ENCODE measurements at regions of chr9 and their contacts with region 1.

Region 1: DNA sequence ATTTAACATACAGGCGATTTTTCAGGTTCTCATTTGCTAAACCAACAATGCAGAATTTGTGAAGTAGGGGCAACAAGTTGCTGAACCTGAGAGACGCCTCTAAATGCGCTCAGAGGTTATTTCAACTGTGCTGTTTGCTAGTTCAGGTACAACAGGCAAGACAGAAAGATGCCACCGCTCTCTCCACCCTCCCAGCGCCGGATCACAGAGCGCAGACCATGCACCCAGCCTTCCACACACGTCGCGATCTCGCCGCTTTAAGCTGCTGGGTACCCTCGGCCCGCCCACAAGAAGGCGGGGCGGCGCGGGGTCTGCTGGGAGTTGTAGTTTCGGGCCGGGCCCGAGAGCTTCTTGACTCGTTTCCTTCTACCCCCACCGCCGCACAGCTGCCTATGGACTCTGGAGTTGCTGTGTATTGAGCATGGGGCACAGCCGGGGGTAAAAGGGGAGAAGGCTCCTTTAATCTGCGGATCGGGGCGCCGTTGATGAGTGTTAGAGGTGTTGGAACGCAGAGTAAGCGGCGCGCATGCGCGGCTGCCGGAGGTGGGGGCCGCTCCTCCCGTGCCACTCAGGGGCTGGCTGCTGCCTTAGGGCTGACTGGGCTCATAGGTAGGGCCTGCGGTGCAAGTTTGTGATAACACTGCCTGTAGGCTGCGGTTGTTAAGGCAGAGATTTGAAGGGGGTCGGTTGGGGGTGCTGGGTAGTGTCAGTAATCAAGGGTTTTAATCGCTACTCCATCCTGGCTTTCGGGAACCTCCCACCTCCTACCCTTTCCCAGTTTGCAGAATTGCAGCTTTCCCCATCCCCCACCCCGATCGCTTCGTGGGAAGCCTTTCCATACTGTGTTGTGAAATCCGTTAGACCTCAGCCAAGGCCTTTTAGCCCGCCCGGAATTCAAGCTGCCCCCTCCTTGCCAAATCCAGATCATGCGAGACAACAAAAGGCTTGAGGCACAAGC is 40.3 kb upstream of the ABCA1 start:
- DNase-seq: peak; percentile 92
- ATAC-seq: peak; percentile 95 to 99

Region 2: DNA sequence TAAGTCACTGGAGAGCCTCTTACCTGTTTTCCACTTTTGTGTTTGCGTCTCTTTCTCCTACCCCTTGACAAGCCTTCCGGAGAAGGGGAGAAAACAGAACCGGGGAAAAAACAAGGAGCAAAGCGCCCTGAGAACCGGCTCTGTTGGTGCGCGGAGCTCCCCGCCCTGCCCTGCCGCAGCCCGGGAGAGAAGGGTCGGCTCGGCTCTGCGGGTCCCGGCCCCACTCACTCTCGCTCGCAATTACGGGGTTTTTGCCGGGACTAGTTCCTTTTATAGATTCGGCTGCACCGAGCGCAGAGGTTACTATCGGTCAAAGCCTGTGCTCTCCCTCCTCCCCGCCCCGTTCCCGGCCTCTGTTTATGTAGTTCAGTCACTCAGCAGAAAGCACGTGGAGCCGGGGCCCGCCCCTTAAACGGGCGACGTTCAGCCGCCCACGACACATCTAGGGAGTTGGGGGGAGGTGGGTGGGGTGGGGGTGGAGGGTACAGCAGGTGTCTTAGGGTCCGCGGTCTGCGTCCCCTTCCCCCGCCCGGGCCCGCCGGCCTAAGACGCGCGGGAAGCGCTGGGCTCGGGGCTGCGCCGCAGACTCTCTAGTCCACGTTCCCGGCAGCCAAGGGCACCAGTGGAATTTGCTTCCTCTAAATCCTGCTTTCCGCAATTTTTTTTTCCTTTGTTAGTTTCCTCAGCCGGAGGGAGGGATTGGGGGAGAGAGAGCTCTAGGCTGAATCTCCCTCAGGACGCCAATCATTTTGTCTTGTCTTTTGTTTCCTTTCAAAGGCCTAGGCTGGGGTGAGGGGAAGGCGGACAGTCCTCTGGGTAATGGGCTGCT is 40.2 kb before region 1 on chr9 and contains the start of gene ABCA1:
- intact Hi-C with region 1: loop called in 1 of 2 experiments (anchors 2 kb)
- DNase-seq: peak; percentile 93
- ATAC-seq: peak; percentile 87 to 89
- total RNA-seq, gene ABCA1: 8.3 to 19.8 TPM

Region 3: DNA sequence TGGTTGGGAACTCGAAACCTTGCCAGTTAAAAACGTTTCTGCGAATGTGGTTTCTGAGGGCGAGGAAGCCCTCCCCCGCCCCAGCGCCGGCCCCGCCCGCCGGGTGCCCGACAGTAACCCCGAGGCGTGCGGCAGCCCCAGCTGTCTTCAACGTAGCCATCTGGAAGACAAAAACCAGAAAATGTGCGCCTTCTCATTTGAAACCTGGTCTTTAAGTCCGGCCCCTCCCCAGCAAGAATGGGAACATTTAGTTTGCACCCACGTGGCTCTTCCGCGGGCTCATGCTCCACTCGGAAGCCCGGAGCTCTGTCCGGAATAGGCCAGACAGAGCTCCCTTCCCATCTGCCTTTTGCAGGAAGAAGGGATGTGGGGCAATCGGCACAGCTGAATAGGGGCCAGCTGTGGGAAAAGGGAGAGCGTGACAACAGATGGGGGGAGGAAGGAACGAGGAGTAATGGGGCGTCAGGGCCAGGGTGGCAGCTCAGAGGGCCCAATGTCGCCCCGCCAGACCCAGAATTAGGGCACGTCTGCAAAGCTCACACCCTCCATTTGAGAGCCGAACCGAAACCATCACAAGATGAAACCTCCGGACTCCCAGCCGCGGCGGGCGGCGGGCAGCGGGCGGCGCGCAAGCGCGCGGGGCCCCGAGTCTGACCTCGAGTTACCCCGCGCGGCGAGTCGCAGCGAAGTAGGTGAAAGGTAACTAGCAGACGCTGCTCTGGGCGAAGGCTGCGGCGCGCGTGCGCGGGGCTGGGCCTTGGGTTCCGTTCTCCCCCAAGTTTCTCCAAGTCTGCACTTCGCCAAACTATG is 23.0 kb after region 1 on chr9:
- intact Hi-C with region 1: loop called in 1 of 2 experiments (anchors 2 kb)
- DNase-seq: peak; percentile 93
- ATAC-seq: peak; percentile 87 to 92